ENCODE measurements at regions of chr10 and their contacts with region 1.

Region 1: GRCh38 chr10:26860443-26861204 is at the start of gene ABI1:
- DNase-seq: peak; percentile 97
- H3K4me3 Mint-ChIP-seq: peak within 1 kb of the TSS; percentile 97
- H3K27ac Mint-ChIP-seq: peak within 1 kb of the TSS; percentile 100
- H3K4me1 Mint-ChIP-seq: peaks cover 39% of the 10 kb centered on the region
- H3K27me3 Mint-ChIP-seq: peaks cover 15% of the 10 kb centered on the region
- total RNA-seq, gene ABI1: 66.6 and 68.0 TPM in 2 replicates

Region 2: DNA sequence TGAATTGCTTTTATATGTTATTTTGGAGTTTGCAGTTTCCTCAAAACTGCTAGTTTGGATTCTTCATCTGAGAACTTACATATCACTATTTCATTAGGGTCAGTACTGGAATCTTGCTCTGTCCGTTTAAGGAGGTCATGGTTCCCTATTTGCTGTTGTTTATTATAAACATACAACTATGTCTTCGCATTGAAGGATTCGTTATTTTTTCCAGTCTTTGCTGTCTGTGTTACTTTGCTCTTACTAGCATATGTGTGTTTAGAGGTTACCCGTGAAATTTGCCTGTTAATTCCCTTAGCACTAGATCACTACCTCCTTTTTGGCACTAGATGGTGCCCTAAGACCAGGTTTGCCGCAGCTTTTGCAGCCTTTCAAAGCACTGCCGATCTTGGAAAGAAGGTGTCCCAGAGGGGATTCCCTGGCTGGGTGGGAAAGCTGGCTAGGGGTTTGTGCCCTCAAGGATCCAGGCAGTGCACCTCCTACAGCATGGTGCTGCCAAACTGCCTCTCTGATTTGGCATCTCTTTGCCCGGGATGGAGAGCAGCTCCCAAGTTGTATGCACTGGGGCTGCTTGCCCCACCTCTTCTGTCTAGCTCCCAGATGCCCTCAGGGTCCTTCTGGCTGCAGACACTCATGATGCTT is 525.6 kb before region 1 on chr10:
- intact Hi-C with region 1: loop called (anchors 1 kb)
- DNase-seq: peak; percentile 50
- H3K4me3 Mint-ChIP-seq: peak overlapping the region; percentile 84
- H3K27ac Mint-ChIP-seq: peak overlapping the region; percentile 81
- H3K4me1 Mint-ChIP-seq: peaks cover 14% of the 10 kb centered on the region
- H3K27me3 Mint-ChIP-seq: no peaks in the 10 kb centered on the region

Region 3: GRCh38 chr10:26574783-26575182 is 285.8 kb before region 1 on chr10:
- intact Hi-C with region 1: no loop called
- DNase-seq: no peak
- H3K4me3 Mint-ChIP-seq: no peak overlapping the region
- H3K27ac Mint-ChIP-seq: no peak overlapping the region
- H3K4me1 Mint-ChIP-seq: no peaks in the 10 kb centered on the region
- H3K27me3 Mint-ChIP-seq: no peaks in the 10 kb centered on the region

Region 4: DNA sequence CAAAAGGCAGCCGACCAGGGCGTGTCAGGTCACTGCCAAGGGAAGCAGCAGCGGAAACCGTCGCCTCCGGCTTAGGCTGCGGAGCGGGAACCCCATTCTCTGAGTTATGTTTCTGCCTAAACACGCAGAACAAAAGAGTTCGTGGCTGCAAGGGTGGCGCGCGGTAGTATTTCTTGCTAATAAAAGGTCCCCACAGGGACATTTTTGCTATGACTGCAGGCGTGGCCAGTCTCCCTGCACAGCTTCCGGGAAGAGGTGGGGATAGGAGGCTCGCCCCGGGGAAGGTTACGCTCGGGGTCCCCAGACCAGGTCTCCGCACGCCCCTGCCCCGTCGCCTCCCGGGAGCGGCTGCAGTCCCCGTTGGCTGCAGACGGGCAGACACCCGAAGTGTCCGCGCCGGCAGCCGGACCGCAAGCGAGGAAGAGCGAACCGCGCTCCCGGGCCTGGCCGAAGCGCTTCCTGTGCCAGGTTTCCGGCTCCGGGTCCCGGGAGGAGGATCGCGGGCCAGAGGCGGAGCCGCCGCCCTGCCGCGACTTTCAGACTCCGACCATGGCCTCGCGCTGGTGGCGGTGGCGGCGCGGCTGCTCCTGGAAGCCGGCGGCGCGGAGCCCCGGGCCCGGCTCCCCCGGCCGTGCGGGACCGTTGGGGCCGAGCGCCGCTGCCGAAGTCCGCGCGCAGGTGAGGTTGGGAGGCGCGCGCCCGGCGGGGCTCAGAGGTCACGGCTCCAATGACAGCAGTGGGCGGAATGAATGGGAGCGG is 163.3 kb before region 1 on chr10 and contains the start of gene PDSS1:
- intact Hi-C with region 1: loop called (anchors 1 kb)
- DNase-seq: peak; percentile 64
- H3K4me3 Mint-ChIP-seq: peak within 1 kb of the TSS; percentile 100
- H3K27ac Mint-ChIP-seq: peak within 1 kb of the TSS; percentile 94
- H3K4me1 Mint-ChIP-seq: peaks cover 31% of the 10 kb centered on the region
- H3K27me3 Mint-ChIP-seq: no peaks in the 10 kb centered on the region
- total RNA-seq, gene PDSS1: 39.3 and 43.1 TPM in 2 replicates

Region 5: GRCh38 chr10:26805567-26806245 is 54.9 kb before region 1 on chr10:
- intact Hi-C with region 1: loop called (anchors 10 kb)
- DNase-seq: no peak
- H3K4me3 Mint-ChIP-seq: no peak overlapping the region
- H3K27ac Mint-ChIP-seq: peak overlapping the region; percentile 58
- H3K4me1 Mint-ChIP-seq: peaks cover 65% of the 10 kb centered on the region
- H3K27me3 Mint-ChIP-seq: no peaks in the 10 kb centered on the region

Region 6: GRCh38 chr10:26881600-26882331 is 21.1 kb after region 1 on chr10:
- intact Hi-C with region 1: loop called (anchors 1 kb)
- DNase-seq: no peak
- H3K4me3 Mint-ChIP-seq: no peak overlapping the region
- H3K27ac Mint-ChIP-seq: no peak overlapping the region
- H3K4me1 Mint-ChIP-seq: peaks cover 6% of the 10 kb centered on the region
- H3K27me3 Mint-ChIP-seq: peaks cover 17% of the 10 kb centered on the region

Region 7: GRCh38 chr10:26997610-26998009 is 137.0 kb after region 1 on chr10:
- intact Hi-C with region 1: no loop called
- DNase-seq: peak; percentile 1
- H3K4me3 Mint-ChIP-seq: no peak overlapping the region
- H3K27ac Mint-ChIP-seq: no peak overlapping the region
- H3K4me1 Mint-ChIP-seq: peaks cover 7% of the 10 kb centered on the region
- H3K27me3 Mint-ChIP-seq: peaks cover 4% of the 10 kb centered on the region

Region 8: DNA sequence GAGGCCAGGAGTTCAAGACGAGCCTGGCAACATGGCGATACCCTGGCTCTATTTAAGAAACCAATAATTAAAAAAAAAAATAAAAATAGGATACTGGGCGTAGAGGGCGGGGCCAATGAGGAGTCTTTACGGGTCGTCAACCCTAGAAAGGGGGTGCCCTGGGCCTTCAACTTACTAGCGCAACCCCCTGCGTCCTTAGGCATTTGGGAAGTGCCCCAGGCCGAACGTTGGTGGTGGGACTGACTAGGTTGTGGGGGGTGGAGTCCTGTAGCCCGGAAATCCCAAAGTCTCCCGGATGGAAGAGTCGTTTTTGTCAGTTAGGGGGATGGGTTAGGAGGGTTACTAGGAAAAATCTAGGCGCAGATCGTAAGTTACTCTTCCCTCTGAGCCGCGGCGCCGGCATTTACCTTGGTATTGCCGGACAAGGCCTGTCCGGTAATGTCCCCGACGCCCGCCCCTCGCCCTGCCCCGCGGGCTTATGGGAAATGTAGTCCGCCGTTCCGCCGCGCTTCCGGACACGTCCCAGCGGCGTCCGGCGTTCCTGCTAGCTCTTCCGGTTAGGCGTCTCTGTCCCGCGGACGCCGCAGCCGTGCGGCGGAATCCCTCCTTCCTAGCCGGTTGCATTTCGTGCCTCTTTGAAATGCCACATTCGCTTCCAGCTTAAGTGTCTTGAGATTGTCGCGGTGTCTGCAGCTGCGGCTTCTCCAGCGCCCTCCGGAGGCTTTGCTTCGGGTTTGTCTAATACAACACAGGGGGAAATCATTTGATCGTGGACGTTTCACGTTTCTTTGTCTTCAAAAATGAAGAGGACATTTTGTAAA is 381.2 kb after region 1 on chr10:
- intact Hi-C with region 1: loop called (anchors 1 kb)
- DNase-seq: peak; percentile 87
- H3K4me3 Mint-ChIP-seq: peak overlapping the region; percentile 89
- H3K27ac Mint-ChIP-seq: peak overlapping the region; percentile 93
- H3K4me1 Mint-ChIP-seq: peaks cover 29% of the 10 kb centered on the region
- H3K27me3 Mint-ChIP-seq: no peaks in the 10 kb centered on the region

Region 9: DNA sequence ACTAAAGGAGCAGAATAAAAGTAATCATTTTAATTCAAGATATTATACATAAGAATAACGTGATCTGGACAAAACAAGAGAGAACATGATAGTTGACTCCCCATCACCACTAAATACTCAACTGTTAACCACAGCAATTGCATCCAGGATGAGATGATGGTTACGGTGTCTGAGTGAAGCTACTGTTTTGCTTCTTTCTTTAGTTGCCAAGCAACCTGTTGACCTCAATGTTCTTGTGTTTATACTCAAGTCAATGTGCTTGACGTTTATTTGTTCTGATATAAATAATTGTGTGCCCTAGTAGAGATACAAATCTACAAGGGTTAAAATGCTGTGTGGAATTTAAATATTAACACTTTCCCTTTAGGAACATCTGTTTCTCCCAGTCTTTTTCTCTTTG is 1473.7 kb after region 1 on chr10:
- intact Hi-C with region 1: loop called (anchors 10 kb)
- DNase-seq: peak; percentile 66
- H3K4me3 Mint-ChIP-seq: peak overlapping the region; percentile 81
- H3K27ac Mint-ChIP-seq: peak overlapping the region; percentile 99
- H3K4me1 Mint-ChIP-seq: peaks cover 67% of the 10 kb centered on the region
- H3K27me3 Mint-ChIP-seq: peaks cover 21% of the 10 kb centered on the region